Caco-2 (cell line): ENCODE measurements at regions of chr19 and their contacts with region 1.

Region 1: GRCh38 chr19:32373585-32374295 is 28.3 kb downstream of the ZNF507 start:
- DNase-seq: peak; percentile 88 to 93
- H3K4me3 ChIP-seq: no peak overlapping the region
- H3K4me3 Mint-ChIP-seq: peak overlapping the region; percentile 66
- H3K27ac Mint-ChIP-seq: peak overlapping the region; percentile 96
- H3K4me1 ChIP-seq: peaks cover 37% of the 10 kb centered on the region
- H3K4me1 Mint-ChIP-seq: peaks cover 54% of the 10 kb centered on the region
- H3K27me3 ChIP-seq: no peaks in the 10 kb centered on the region
- H3K27me3 Mint-ChIP-seq: no peaks in the 10 kb centered on the region
- CTCF ChIP-seq: no peak

Region 2: GRCh38 chr19:32287811-32288227 is 85.9 kb before region 1 on chr19:
- CTCF ChIA-PET with region 1: no interaction called
- POLR2A ChIA-PET with region 1: no interaction called
- intact Hi-C with region 1: loop called (anchors 5 kb)
- DNase-seq: peak; percentile 62 to 72
- H3K4me3 ChIP-seq: no peak overlapping the region
- H3K4me3 Mint-ChIP-seq: no peak overlapping the region
- H3K27ac Mint-ChIP-seq: no peak overlapping the region
- H3K4me1 ChIP-seq: no peaks in the 10 kb centered on the region
- H3K4me1 Mint-ChIP-seq: no peaks in the 10 kb centered on the region
- H3K27me3 ChIP-seq: peaks cover 2% of the 10 kb centered on the region; the same call in 1 of the 2 replicates
- H3K27me3 Mint-ChIP-seq: peaks cover 18% of the 10 kb centered on the region
- CTCF ChIP-seq: peak; percentile 33 to 62

Region 3: GRCh38 chr19:32339988-32340874 is 33.5 kb before region 1 on chr19:
- CTCF ChIA-PET with region 1: interaction called, 5 read pairs
- POLR2A ChIA-PET with region 1: interaction called, 14 read pairs
- intact Hi-C with region 1: loop called (anchors 1 kb)
- DNase-seq: peak; percentile 74 to 76
- H3K4me3 ChIP-seq: no peak overlapping the region
- H3K4me3 Mint-ChIP-seq: no peak overlapping the region
- H3K27ac Mint-ChIP-seq: no peak overlapping the region
- H3K4me1 ChIP-seq: 0 out of 2 replicates have a peak, but pooled peaks cover 3% of the 10 kb centered on the region
- H3K4me1 Mint-ChIP-seq: no peaks in the 10 kb centered on the region
- H3K27me3 ChIP-seq: no peaks in the 10 kb centered on the region
- H3K27me3 Mint-ChIP-seq: no peaks in the 10 kb centered on the region
- CTCF ChIP-seq: peak; percentile 68 to 76

Region 4: GRCh38 chr19:32345261-32346207 is 28.2 kb before region 1 on chr19 and contains the start of gene ZNF507:
- CTCF ChIA-PET with region 1: interaction called, 5 read pairs
- POLR2A ChIA-PET with region 1: interaction called, 14 read pairs
- intact Hi-C with region 1: loop called (anchors 1 kb)
- DNase-seq: peak; percentile 88 to 93
- H3K4me3 ChIP-seq: peak within 1 kb of the TSS; percentile 84
- H3K4me3 Mint-ChIP-seq: peak within 1 kb of the TSS; percentile 95
- H3K27ac Mint-ChIP-seq: peak within 1 kb of the TSS; percentile 98
- H3K4me1 ChIP-seq: peaks cover 18% of the 10 kb centered on the region
- H3K4me1 Mint-ChIP-seq: peaks cover 20% of the 10 kb centered on the region
- H3K27me3 ChIP-seq: no peaks in the 10 kb centered on the region
- H3K27me3 Mint-ChIP-seq: no peaks in the 10 kb centered on the region
- CTCF ChIP-seq: no peak
- total RNA-seq, gene ZNF507: 26.6 and 27.4 TPM in 2 replicates

Region 5: GRCh38 chr19:32363197-32363596 is 10.5 kb before region 1 on chr19:
- CTCF ChIA-PET with region 1: interaction called, 5 read pairs
- POLR2A ChIA-PET with region 1: interaction called, 6 read pairs
- intact Hi-C with region 1: loop called (anchors 1 kb)
- DNase-seq: peak in 1 of 2 experiments; percentile 73
- H3K4me3 ChIP-seq: no peak overlapping the region
- H3K4me3 Mint-ChIP-seq: peak overlapping the region; percentile 4
- H3K27ac Mint-ChIP-seq: peak overlapping the region; percentile 41
- H3K4me1 ChIP-seq: peaks cover 26% of the 10 kb centered on the region
- H3K4me1 Mint-ChIP-seq: peaks cover 26% of the 10 kb centered on the region
- H3K27me3 ChIP-seq: no peaks in the 10 kb centered on the region
- H3K27me3 Mint-ChIP-seq: no peaks in the 10 kb centered on the region
- CTCF ChIP-seq: no peak

Region 6: DNA sequence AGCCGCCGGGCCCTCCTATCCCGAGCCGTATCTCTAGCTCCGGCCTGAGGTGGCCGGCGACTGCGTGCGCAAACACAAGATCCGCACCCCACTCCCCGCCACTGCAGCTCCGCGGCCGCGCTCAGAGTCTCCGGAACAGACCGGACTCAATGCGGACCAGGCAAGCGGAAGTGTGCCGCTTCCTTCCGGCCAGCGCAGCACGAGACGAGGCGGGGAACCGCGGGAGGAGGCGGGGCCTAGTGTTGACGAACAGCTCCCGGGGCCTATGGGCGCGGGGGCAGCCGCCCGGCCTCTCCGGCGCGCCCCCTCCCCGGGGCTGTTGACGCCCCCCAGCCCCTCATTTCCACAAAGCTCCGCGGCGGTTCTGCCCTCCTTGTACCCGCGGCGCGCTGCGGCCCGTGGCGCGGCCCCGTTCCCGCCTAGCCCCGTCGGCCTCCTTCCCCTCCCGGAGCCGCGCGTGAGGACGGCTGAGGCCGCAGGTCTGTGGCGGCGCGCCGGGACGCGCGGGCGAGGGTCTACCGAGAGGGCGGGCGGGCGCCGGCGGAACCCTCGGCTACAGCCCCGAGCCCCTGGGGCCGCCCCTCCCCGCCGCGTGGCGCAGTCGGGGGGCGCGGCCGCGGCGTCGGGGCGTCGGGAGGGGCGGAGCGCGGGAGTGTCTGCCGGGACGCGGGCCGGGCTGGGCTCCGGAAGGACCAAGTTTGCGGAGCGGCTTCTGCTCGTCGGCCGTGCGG is 31.9 kb after region 1 on chr19 and contains the start of gene DPY19L3:
- CTCF ChIA-PET with region 1: no interaction called
- POLR2A ChIA-PET with region 1: interaction called, 10 read pairs
- intact Hi-C with region 1: loop called (anchors 2 kb)
- DNase-seq: peak; percentile 94 to 98
- H3K4me3 ChIP-seq: peak within 1 kb of the TSS; percentile 99
- H3K4me3 Mint-ChIP-seq: peak within 1 kb of the TSS; percentile 77
- H3K27ac Mint-ChIP-seq: peak within 1 kb of the TSS; percentile 79
- H3K4me1 ChIP-seq: peaks cover 5% of the 10 kb centered on the region
- H3K4me1 Mint-ChIP-seq: peaks cover 15% of the 10 kb centered on the region
- H3K27me3 ChIP-seq: no peaks in the 10 kb centered on the region
- H3K27me3 Mint-ChIP-seq: no peaks in the 10 kb centered on the region
- CTCF ChIP-seq: no peak
- total RNA-seq, gene DPY19L3: 40.7 and 41.5 TPM in 2 replicates